ENCODE measurements at regions of chr3 and their contacts with region 1.

Region 1: GRCh38 chr3:134212906-134213665 is 37.6 kb downstream of the RYK start:
- DNase-seq: no peak
- H3K4me3 ChIP-seq: no peak overlapping the region
- H3K27ac ChIP-seq: no peak overlapping the region
- H3K4me1 ChIP-seq: peaks cover 13% of the 10 kb centered on the region
- H3K27me3 ChIP-seq: no peaks in the 10 kb centered on the region
- CTCF ChIP-seq: peak; percentile 96 to 97 (median 97)
- POLR2A ChIP-seq: no peak

Region 2: GRCh38 chr3:134277066-134277660 is 64.1 kb after region 1 on chr3:
- intact Hi-C with region 1: no loop called
- DNase-seq: no peak
- H3K4me3 ChIP-seq: no peak overlapping the region
- H3K27ac ChIP-seq: no peak overlapping the region
- H3K4me1 ChIP-seq: peaks cover 12% of the 10 kb centered on the region
- H3K27me3 ChIP-seq: no peaks in the 10 kb centered on the region
- CTCF ChIP-seq: no peak
- POLR2A ChIP-seq: no peak

Region 3: GRCh38 chr3:134294302-134295280 is 81.5 kb after region 1 on chr3:
- intact Hi-C with region 1: loop called (anchors 5 kb)
- DNase-seq: no peak
- H3K4me3 ChIP-seq: no peak overlapping the region
- H3K27ac ChIP-seq: no peak overlapping the region
- H3K4me1 ChIP-seq: peaks cover 14% of the 10 kb centered on the region
- H3K27me3 ChIP-seq: no peaks in the 10 kb centered on the region
- CTCF ChIP-seq: no peak
- POLR2A ChIP-seq: no peak

Region 4: DNA sequence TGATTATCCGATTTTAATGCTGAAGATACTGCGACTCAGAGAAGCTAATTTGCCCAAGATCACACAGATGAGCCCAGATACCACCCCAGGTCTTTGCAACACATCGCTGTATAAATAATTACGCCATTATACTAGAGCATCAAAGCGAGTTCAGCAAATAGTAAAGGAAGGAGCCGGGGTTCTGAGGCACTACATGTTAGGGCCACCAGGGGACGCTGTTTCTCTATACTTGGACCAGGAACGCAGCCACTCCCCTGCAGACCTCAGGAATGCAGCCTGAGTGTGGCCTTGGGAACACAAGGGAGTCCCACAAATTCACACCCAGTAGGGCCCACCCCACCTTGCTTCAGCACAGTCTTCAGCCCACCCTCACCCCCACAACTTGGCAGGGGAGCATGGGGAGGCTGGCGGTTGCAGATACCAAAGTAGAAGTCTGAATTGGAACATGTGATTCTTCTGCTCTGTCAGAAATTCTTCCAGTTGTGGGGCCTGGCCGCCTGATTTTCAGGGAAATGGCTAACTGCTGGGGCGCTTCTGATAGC is 95.3 kb after region 1 on chr3:
- intact Hi-C with region 1: loop called (anchors 5 kb)
- DNase-seq: no peak
- H3K4me3 ChIP-seq: peak overlapping the region in 1 of 2 donors; percentile 8
- H3K27ac ChIP-seq: peak overlapping the region; percentile 80
- H3K4me1 ChIP-seq: peaks cover 40% of the 10 kb centered on the region
- H3K27me3 ChIP-seq: no peaks in the 10 kb centered on the region
- CTCF ChIP-seq: peak; percentile 98 to 100 (median 99)
- POLR2A ChIP-seq: no peak

Region 5: GRCh38 chr3:134473868-134474546 is 260.9 kb after region 1 on chr3:
- intact Hi-C with region 1: loop called (anchors 5 kb)
- DNase-seq: no peak
- H3K4me3 ChIP-seq: no peak overlapping the region
- H3K27ac ChIP-seq: no peak overlapping the region
- H3K4me1 ChIP-seq: peaks cover 27% of the 10 kb centered on the region
- H3K27me3 ChIP-seq: no peaks in the 10 kb centered on the region
- CTCF ChIP-seq: peak; percentile 63 to 89 (median 69)
- POLR2A ChIP-seq: no peak